Caco-2 (cell line): ENCODE measurements at regions of chr12 and their contacts with region 1.

Region 1: GRCh38 chr12:31959161-31959700 is at the start of gene RESF1:
- DNase-seq: peak; percentile 97 to 98
- H3K4me3 ChIP-seq: peak within 1 kb of the TSS; percentile 69
- H3K4me3 Mint-ChIP-seq: peak within 1 kb of the TSS; percentile 84
- H3K27ac Mint-ChIP-seq: peak within 1 kb of the TSS; percentile 93
- H3K4me1 ChIP-seq: peaks cover 38% of the 10 kb centered on the region
- H3K4me1 Mint-ChIP-seq: peaks cover 42% of the 10 kb centered on the region
- H3K27me3 ChIP-seq: no peaks in the 10 kb centered on the region
- H3K27me3 Mint-ChIP-seq: no peaks in the 10 kb centered on the region
- CTCF ChIP-seq: peak in 1 of 2 experiments; percentile 0
- total RNA-seq, gene RESF1: 110 and 118 TPM in 2 replicates

Region 2: GRCh38 chr12:31682136-31682962 is 276.9 kb before region 1 on chr12:
- CTCF ChIA-PET with region 1: no interaction called
- POLR2A ChIA-PET with region 1: no interaction called
- intact Hi-C with region 1: loop called (anchors 1 kb)
- DNase-seq: peak; percentile 85 to 86
- H3K4me3 ChIP-seq: no peak overlapping the region
- H3K4me3 Mint-ChIP-seq: no peak overlapping the region
- H3K27ac Mint-ChIP-seq: no peak overlapping the region
- H3K4me1 ChIP-seq: no peaks in the 10 kb centered on the region; the same call in 1 of the 2 replicates
- H3K4me1 Mint-ChIP-seq: peaks cover 14% of the 10 kb centered on the region
- H3K27me3 ChIP-seq: no peaks in the 10 kb centered on the region
- H3K27me3 Mint-ChIP-seq: no peaks in the 10 kb centered on the region
- CTCF ChIP-seq: peak; percentile 78 to 94

Region 3: DNA sequence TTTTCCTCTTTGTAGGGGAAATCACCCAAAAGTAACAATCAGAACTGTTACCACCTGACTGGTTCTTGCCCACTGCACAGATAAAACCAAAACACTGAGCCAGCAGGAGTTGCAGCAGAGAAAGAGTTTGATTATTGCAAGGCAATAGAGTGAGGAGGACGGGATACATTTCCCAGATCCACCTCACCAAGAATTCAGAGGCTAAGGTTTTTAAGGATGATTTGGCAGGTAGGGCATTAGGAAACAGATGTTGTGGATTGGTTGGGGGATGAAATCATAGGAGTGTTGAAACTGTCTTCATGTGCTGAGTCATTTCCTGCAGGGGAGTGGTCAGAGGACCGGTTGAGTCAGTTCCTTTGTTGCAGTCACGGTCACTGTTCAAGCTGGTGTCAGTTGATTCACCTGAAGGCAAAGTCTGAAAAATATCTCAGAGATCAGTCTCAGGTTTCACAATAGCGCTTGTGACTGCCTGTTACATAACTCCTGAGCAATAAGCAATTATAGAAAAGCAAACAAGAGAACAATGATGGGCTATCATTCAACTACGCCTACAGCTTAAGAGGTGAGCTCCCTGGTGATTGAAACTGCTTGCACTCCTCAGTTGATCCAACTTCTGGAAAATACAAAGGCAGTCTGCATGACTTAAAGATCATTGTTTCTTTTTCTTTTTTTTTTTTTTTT is 210.1 kb before region 1 on chr12:
- CTCF ChIA-PET with region 1: no interaction called
- POLR2A ChIA-PET with region 1: no interaction called
- intact Hi-C with region 1: loop called (anchors 1 kb)
- DNase-seq: peak; percentile 92 to 95
- H3K4me3 ChIP-seq: no peak overlapping the region
- H3K4me3 Mint-ChIP-seq: peak overlapping the region; percentile 31
- H3K27ac Mint-ChIP-seq: peak overlapping the region; percentile 96
- H3K4me1 ChIP-seq: peaks cover 18% of the 10 kb centered on the region
- H3K4me1 Mint-ChIP-seq: peaks cover 22% of the 10 kb centered on the region
- H3K27me3 ChIP-seq: no peaks in the 10 kb centered on the region
- H3K27me3 Mint-ChIP-seq: no peaks in the 10 kb centered on the region
- CTCF ChIP-seq: no peak

Region 4: GRCh38 chr12:32034045-32034444 is 74.8 kb after region 1 on chr12:
- CTCF ChIA-PET with region 1: no interaction called
- POLR2A ChIA-PET with region 1: no interaction called
- intact Hi-C with region 1: loop called (anchors 2 kb)
- DNase-seq: peak; percentile 74 to 90
- H3K4me3 ChIP-seq: no peak overlapping the region
- H3K4me3 Mint-ChIP-seq: peak overlapping the region; percentile 28
- H3K27ac Mint-ChIP-seq: peak overlapping the region; percentile 82
- H3K4me1 ChIP-seq: peaks cover 17% of the 10 kb centered on the region
- H3K4me1 Mint-ChIP-seq: peaks cover 32% of the 10 kb centered on the region
- H3K27me3 ChIP-seq: no peaks in the 10 kb centered on the region
- H3K27me3 Mint-ChIP-seq: no peaks in the 10 kb centered on the region
- CTCF ChIP-seq: no peak

Region 5: DNA sequence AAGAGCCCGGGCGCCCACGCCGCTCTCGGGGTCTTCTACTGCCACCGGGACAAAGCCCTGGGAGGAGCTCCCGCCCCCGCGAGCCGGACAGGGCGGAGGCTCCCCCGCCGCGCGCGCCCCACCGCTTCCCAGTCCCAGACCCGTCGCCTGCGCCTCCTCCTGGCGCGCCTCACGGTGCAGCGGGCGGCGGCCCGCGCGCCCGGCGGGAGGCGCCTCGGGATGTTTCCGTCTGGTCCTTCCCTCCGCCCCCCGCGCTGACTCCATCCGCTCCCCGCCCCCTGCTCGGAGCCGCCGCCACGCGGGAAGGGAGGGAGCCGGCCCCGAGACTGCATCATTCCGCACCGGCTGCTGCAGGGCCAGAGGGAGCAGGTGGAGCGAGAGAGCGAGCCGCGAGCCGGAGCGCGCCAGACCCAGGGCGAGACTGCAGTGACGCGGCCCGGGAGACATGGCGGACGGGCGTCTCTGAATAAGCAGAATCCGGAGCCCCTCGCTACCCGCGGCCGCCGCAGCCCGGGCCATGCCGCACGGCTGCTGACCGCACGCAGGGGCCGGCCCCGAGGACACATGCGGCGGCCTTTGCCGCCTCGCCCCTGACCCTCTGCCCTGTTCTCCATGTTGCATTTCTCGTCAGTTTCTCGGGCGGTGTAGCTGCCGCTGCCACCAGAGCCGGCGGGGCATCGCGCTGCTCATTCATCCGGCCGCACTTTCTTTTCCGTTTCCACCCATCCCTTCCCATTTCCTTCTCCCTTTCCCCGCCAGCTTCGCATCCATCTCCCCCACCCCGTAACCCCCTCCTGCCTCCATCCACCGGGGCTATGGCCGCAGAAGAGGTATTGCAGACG is 147.5 kb after region 1 on chr12 and contains the start of gene BICD1:
- CTCF ChIA-PET with region 1: no interaction called
- POLR2A ChIA-PET with region 1: no interaction called
- intact Hi-C with region 1: loop called (anchors 1 kb)
- DNase-seq: peak; percentile 96 to 98
- H3K4me3 ChIP-seq: peak within 1 kb of the TSS; percentile 91
- H3K4me3 Mint-ChIP-seq: peak within 1 kb of the TSS; percentile 82
- H3K27ac Mint-ChIP-seq: peak within 1 kb of the TSS; percentile 58
- H3K4me1 ChIP-seq: peaks cover 26% of the 10 kb centered on the region
- H3K4me1 Mint-ChIP-seq: peaks cover 25% of the 10 kb centered on the region
- H3K27me3 ChIP-seq: no peaks in the 10 kb centered on the region
- H3K27me3 Mint-ChIP-seq: no peaks in the 10 kb centered on the region
- CTCF ChIP-seq: peak; percentile 37 to 69
- total RNA-seq, gene BICD1: 36.2 and 38.8 TPM in 2 replicates